ENCODE measurements at regions of chr2 and their contacts with region 1.

Region 1: GRCh38 chr2:215060861-215061536 is 77.4 kb downstream of the ABCA12 start:
- DNase-seq: no peak
- ATAC-seq: no peak
- H3K4me3 ChIP-seq: no peak overlapping the region
- H3K4me3 Mint-ChIP-seq: no peak overlapping the region
- H3K27ac ChIP-seq: no peak overlapping the region
- H3K27ac Mint-ChIP-seq: no peak overlapping the region
- H3K4me1 ChIP-seq: no peaks in the 10 kb centered on the region
- H3K4me1 Mint-ChIP-seq: no peaks in the 10 kb centered on the region
- H3K27me3 ChIP-seq: no peaks in the 10 kb centered on the region
- H3K27me3 Mint-ChIP-seq: no peaks in the 10 kb centered on the region
- CTCF ChIP-seq: no peak

Region 2: GRCh38 chr2:215002500-215002899 is 58.5 kb before region 1 on chr2:
- CTCF ChIA-PET with region 1: no interaction called
- POLR2A ChIA-PET with region 1: no interaction called
- intact Hi-C with region 1: loop called in 1 of 2 experiments (anchors 2 kb)
- DNase-seq: peak in 3 of 14 experiments; percentile 5 to 6 (median 5)
- ATAC-seq: no peak
- H3K4me3 ChIP-seq: no peak overlapping the region
- H3K4me3 Mint-ChIP-seq: no peak overlapping the region
- H3K27ac ChIP-seq: no peak overlapping the region
- H3K27ac Mint-ChIP-seq: no peak overlapping the region
- H3K4me1 ChIP-seq: no peaks in the 10 kb centered on the region
- H3K4me1 Mint-ChIP-seq: no peaks in the 10 kb centered on the region
- H3K27me3 ChIP-seq: no peaks in the 10 kb centered on the region
- H3K27me3 Mint-ChIP-seq: no peaks in the 10 kb centered on the region
- CTCF ChIP-seq: no peak

Region 3: GRCh38 chr2:215301994-215302393 is 241.0 kb after region 1 on chr2:
- CTCF ChIA-PET with region 1: no interaction called
- POLR2A ChIA-PET with region 1: no interaction called
- intact Hi-C with region 1: no loop called
- DNase-seq: no peak
- ATAC-seq: no peak
- H3K4me3 ChIP-seq: no peak overlapping the region
- H3K4me3 Mint-ChIP-seq: no peak overlapping the region
- H3K27ac ChIP-seq: no peak overlapping the region
- H3K27ac Mint-ChIP-seq: no peak overlapping the region
- H3K4me1 ChIP-seq: no peaks in the 10 kb centered on the region
- H3K4me1 Mint-ChIP-seq: no peaks in the 10 kb centered on the region
- H3K27me3 ChIP-seq: no peaks in the 10 kb centered on the region
- H3K27me3 Mint-ChIP-seq: no peaks in the 10 kb centered on the region
- CTCF ChIP-seq: no peak

Measured in CD4-positive, alpha-beta T cell (primary cell).